Mammary epithelial cell (primary cell): ENCODE measurements at regions of chr5 and their contacts with region 1.

Region 1: DNA sequence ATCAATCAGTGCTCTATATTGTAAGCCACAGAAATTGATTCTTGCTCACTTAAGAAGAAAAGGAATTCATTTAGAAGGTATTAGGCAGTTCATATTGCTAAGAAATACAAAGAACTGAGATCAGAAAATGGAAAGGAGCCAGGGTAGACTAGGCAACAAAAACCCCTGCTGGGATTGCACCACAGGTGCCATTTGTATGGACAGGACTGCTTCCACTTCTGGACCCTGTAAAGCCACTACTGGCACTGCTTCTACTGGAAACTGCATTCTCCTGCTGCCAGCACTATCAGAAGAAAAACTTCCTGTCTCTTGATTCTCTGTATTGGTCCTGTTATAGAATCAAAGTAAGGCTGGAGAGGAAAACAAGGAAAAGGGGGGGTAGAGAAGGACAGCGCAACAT is 45.9 kb downstream of the CERT1 start:
- DNase-seq: no peak
- H3K4me3 ChIP-seq: no peak overlapping the region
- H3K27ac ChIP-seq: no peak overlapping the region
- H3K4me1 ChIP-seq: peaks cover 9% of the 10 kb centered on the region
- H3K27me3 ChIP-seq: no peaks in the 10 kb centered on the region
- CTCF ChIP-seq: no peak

Region 2: GRCh38 chr5:75412111-75412990 is 53.1 kb before region 1 on chr5:
- CTCF ChIA-PET with region 1: no interaction called
- dilution Hi-C with region 1: loop called (anchors 5 kb)
- in situ Hi-C with region 1: no loop called
- intact Hi-C with region 1: no loop called
- DNase-seq: no peak
- H3K4me3 ChIP-seq: no peak overlapping the region
- H3K27ac ChIP-seq: no peak overlapping the region
- H3K4me1 ChIP-seq: no peaks in the 10 kb centered on the region
- H3K27me3 ChIP-seq: no peaks in the 10 kb centered on the region
- CTCF ChIP-seq: peak in 1 of 2 donors; percentile 4

Region 3: GRCh38 chr5:75600535-75600934 is 135.1 kb after region 1 on chr5:
- CTCF ChIA-PET with region 1: no interaction called
- dilution Hi-C with region 1: no loop called
- in situ Hi-C with region 1: no loop called
- intact Hi-C with region 1: no loop called
- DNase-seq: no peak
- H3K4me3 ChIP-seq: no peak overlapping the region
- H3K27ac ChIP-seq: no peak overlapping the region
- H3K4me1 ChIP-seq: no peaks in the 10 kb centered on the region
- H3K27me3 ChIP-seq: no peaks in the 10 kb centered on the region
- CTCF ChIP-seq: no peak